PC-9 (cell line): ENCODE measurements at regions of chrX and their contacts with region 1.

Region 1: GRCh38 chrX:149512225-149512885 is 7.2 kb upstream of the IDS start:
- DNase-seq: peak; percentile 71 to 81
- H3K4me3 ChIP-seq: no peak overlapping the region; the same call in 1 of the 2 replicates
- H3K27ac ChIP-seq: peak overlapping the region; percentile 85
- H3K4me1 ChIP-seq: peaks cover 44% of the 10 kb centered on the region
- H3K27me3 ChIP-seq: no peaks in the 10 kb centered on the region
- CTCF ChIP-seq: peak; percentile 84

Region 2: GRCh38 chrX:149230689-149231088 is 281.7 kb before region 1 on chrX:
- CTCF ChIA-PET with region 1: no interaction called
- POLR2A ChIA-PET with region 1: no interaction called
- intact Hi-C with region 1: no loop called
- DNase-seq: no peak
- H3K4me3 ChIP-seq: no peak overlapping the region
- H3K27ac ChIP-seq: no peak overlapping the region
- H3K4me1 ChIP-seq: no peaks in the 10 kb centered on the region
- H3K27me3 ChIP-seq: no peaks in the 10 kb centered on the region
- CTCF ChIP-seq: no peak

Region 3: DNA sequence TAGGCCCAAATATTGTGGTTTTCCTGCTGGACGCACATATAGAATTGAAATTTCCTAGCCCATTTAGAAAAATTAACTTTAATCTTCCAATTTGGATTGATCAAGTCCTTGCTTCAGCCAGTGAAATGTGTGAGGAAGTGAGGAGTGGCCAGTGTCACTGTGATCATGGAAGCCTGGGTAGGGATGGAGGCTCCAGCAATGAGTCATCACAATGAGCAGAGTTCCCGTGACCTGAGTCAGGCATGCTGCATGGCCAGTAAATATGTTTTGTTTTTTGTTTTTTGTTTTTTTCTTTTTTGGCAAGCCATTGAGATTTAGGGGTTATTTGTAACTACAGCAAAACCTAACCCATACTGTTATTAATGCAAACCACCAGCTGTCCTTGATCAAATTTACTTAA is 59.3 kb before region 1 on chrX:
- CTCF ChIA-PET with region 1: no interaction called
- POLR2A ChIA-PET with region 1: no interaction called
- intact Hi-C with region 1: no loop called
- DNase-seq: peak; percentile 44 to 60
- H3K4me3 ChIP-seq: no peak overlapping the region
- H3K27ac ChIP-seq: no peak overlapping the region
- H3K4me1 ChIP-seq: peaks cover 6% of the 10 kb centered on the region; the same call in 1 of the 2 replicates
- H3K27me3 ChIP-seq: no peaks in the 10 kb centered on the region
- CTCF ChIP-seq: no peak

Region 4: DNA sequence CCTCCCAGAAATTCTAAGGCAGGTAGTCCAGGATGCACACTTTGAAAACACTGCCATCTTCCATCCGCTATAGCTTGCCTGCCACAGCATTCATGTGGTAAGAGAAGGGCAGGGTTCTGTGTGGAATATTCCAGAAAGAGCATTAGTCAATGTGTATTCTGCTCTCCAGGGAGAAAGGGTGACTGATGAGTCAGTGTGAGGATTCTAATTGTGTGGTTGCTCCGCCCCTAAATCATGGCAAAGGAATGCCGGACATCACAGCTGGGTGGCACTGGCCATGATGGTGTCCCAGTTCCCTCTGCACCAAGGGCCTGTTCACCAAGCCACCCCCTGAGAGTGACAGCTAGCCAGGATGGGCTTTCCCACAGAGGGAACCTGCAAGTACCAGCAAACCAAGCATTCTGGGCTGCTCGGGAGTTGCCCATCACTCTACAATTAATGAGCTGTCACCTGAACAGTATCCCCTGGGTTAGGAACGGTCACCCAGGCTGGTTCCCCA is 16.7 kb before region 1 on chrX:
- CTCF ChIA-PET with region 1: no interaction called
- POLR2A ChIA-PET with region 1: interaction called, 5 read pairs
- intact Hi-C with region 1: loop called (anchors 1 kb)
- DNase-seq: peak; percentile 85 to 96
- H3K4me3 ChIP-seq: no peak overlapping the region
- H3K27ac ChIP-seq: peak overlapping the region; percentile 86
- H3K4me1 ChIP-seq: peaks cover 80% of the 10 kb centered on the region
- H3K27me3 ChIP-seq: no peaks in the 10 kb centered on the region
- CTCF ChIP-seq: no peak

Region 5: GRCh38 chrX:149527705-149528104 is 15.3 kb after region 1 on chrX:
- CTCF ChIA-PET with region 1: interaction called, 4 read pairs
- POLR2A ChIA-PET with region 1: no interaction called
- intact Hi-C with region 1: loop called (anchors 1 kb)
- DNase-seq: peak; percentile 34 to 54
- H3K4me3 ChIP-seq: no peak overlapping the region
- H3K27ac ChIP-seq: no peak overlapping the region
- H3K4me1 ChIP-seq: no peaks in the 10 kb centered on the region
- H3K27me3 ChIP-seq: no peaks in the 10 kb centered on the region
- CTCF ChIP-seq: peak; percentile 77

Region 6: DNA sequence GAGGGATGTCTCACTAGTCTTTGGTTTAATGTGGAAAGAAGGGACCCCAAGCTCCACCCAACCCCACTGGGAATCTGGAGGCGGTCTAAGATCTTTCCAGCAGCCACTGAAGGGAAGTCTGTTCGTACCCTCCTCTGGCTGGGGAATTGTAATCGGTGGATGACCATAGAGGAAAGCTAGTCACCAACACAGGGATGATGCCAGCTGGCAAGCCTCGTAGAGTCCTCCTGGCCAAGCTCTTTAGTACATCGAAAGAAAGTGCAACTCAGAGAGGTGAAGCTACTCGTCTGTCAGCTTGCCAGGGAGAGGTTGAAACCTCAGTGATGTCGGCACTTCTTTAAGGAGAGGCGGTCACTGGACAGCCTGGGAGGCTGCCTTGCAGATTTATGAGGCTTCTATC is 909.5 kb after region 1 on chrX:
- CTCF ChIA-PET with region 1: no interaction called
- POLR2A ChIA-PET with region 1: interaction called, 12 read pairs
- intact Hi-C with region 1: no loop called
- DNase-seq: no peak
- H3K4me3 ChIP-seq: no peak overlapping the region
- H3K27ac ChIP-seq: no peak overlapping the region
- H3K4me1 ChIP-seq: no peaks in the 10 kb centered on the region
- H3K27me3 ChIP-seq: no peaks in the 10 kb centered on the region
- CTCF ChIP-seq: no peak

Region 7: DNA sequence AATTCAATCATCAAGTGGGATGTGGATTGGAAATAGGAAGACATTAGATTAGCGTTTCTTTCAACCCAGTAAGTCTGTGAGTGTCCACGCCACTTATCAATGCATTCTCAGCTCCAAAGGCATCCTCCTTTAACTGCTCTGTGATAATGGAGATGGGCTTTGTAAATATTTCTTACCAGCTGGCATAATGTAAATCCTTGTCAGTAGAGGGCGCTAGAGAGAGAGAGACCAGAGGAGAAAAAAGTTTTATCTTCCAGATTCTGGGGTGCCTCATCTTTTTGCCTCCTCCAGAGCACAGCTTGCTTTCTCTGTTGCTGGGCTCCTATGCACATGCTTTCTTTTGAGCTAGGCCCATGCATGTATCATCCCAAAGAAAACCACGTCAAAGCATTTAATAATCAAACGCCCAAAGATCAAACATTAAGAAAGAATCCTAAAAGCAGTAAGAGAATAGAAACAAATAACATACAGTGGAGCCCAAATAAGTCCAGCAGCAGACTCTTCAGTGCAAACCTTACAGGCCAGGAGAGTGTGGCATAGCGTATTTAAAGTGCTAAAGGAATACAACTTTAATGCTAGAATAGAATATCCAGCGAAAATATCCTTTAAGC is 1171.3 kb after region 1 on chrX:
- CTCF ChIA-PET with region 1: no interaction called
- POLR2A ChIA-PET with region 1: no interaction called
- intact Hi-C with region 1: loop called (anchors 10 kb)
- DNase-seq: peak; percentile 21 to 51
- H3K4me3 ChIP-seq: no peak overlapping the region
- H3K27ac ChIP-seq: no peak overlapping the region
- H3K4me1 ChIP-seq: peaks cover 17% of the 10 kb centered on the region
- H3K27me3 ChIP-seq: no peaks in the 10 kb centered on the region
- CTCF ChIP-seq: peak; percentile 95